GM10248 (cell line): ENCODE measurements at regions of chr14 and their contacts with region 1.

Region 1: GRCh38 chr14:104752735-104753531 is at the start of gene SIVA1:
- DNase-seq: peak; percentile 100
- CTCF ChIP-seq: no peak

Region 2: GRCh38 chr14:103427485-103428443 is 1325.2 kb before region 1 on chr14:
- CTCF ChIA-PET with region 1: no interaction called
- POLR2A ChIA-PET with region 1: interaction called, 10 read pairs
- DNase-seq: no peak
- CTCF ChIP-seq: no peak

Region 3: DNA sequence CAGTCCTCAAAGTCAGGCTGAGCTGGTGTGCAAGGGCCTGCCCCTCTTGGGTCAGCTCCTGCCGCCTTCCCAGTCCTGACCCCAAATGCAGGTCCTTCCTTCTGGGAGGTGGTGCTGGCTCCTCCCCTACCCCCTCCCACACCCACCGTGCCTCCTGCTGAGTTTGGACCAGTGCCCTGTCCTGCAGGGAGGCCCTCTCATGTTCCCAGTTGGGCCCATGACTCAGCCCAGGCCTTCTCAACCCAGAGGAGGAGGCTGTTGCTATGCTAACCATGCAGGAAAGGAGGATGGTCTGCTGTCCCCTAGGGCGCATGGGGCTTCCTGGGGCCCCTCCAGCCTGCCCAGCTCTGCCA is 52.4 kb after region 1 on chr14:
- CTCF ChIA-PET with region 1: no interaction called
- POLR2A ChIA-PET with region 1: no interaction called
- DNase-seq: no peak
- CTCF ChIP-seq: no peak

Region 4: DNA sequence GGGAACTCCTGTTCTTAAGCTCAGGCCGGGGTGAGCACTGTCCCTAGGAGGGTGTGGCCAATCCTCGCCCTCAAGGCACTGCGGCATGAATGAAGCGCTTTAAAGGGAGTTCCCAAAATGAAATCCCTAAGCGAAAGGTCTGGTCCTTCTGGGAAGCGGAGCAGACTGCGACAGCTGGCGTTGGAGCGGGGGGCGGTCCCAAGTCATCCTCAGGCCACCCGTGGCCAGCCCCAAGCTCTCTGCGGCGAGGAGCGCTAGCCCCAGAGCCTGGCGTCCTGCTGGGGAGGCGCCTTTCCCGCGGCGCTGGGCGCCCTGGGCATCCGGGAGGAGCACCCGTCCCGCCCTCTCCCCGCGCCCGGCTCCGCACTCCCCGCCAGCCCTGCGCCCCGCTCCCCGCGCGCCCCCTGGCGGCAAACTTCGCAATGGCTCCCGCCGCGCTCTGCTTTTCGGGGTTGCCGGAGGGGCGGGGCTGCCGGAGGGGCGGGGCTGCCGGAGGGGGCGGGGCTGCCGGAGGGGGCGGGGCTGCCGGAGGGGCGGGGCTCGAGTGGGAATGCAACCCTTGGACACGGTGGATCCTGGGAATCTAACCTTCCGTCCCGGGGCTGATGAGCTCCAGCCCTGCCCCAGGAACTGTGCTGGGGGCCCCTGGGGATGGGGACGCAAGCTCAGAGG is 73.4 kb after region 1 on chr14:
- CTCF ChIA-PET with region 1: interaction called, 13 read pairs
- POLR2A ChIA-PET with region 1: interaction called, 4 read pairs
- DNase-seq: peak; percentile 92
- CTCF ChIP-seq: peak; percentile 88

Region 5: DNA sequence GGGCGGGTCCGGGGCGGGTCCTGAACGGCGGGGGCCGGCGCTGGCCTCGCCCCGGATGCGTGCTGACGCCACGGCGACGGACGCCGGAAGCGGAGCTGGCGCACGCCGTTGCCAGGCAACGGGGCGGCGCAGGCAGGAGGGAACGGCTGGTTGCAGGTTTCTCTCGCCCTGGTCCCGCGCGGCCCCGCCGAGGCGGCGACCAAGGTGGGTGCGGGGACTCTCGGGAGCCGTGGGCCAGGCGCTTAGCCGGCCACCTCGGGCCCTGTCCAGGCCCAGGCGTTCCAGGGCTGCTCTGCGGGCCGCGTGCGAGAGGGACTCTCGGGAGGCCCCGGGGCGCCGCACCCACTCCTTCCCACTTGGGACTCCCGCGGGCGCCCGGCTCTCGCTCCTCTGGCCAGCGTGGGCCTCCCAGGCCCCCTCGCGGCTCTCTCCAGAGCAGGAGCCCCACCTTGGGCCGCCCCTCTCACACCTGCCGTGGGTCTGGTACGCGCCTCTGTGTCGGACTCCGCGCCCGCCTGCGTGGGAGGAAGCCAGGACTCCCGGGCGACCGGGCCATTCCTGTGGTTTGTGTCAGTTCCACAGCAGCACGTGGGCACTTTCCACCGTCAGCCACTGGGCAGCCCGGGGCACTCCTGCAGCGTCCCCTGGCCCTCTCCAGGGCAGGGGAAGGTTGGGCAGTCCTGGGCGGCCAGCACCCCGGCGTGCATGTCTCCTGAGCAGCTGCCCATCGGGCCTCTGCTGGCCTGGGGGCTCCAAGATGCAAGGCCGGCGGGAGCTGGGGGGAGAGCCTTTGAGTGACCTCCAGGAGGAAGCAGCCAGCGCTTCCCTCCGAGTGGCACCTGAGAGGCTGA is 233.0 kb after region 1 on chr14 and contains the start of gene CLBA1:
- CTCF ChIA-PET with region 1: no interaction called
- POLR2A ChIA-PET with region 1: no interaction called
- DNase-seq: peak; percentile 100
- CTCF ChIP-seq: no peak